ENCODE measurements at regions of chr1 and their contacts with region 1.

Region 1: DNA sequence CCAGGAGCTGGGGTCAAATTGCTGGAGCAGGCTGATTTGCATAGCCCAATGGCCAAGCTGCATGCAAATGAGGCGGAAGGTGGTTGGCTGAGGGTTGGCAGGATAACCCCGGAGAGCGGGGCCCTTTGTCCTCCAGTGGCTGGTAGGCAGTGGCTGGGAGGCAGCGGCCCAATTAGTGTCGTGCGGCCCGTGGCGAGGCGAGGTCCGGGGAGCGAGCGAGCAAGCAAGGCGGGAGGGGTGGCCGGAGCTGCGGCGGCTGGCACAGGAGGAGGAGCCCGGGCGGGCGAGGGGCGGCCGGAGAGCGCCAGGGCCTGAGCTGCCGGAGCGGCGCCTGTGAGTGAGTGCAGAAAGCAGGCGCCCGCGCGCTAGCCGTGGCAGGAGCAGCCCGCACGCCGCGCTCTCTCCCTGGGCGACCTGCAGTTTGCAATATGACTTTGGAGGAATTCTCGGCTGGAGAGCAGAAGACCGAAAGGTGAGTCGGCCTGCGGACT is at the start of gene GADD45A:
- DNase-seq: peak; percentile 96 to 97 (median 97)
- H3K4me3 ChIP-seq: peak within 1 kb of the TSS; percentile 74 to 92 (median 91)
- H3K4me3 Mint-ChIP-seq: peak within 1 kb of the TSS; percentile 88 to 91
- H3K27ac ChIP-seq: peak within 1 kb of the TSS; percentile 74 to 91
- H3K27ac Mint-ChIP-seq: peak within 1 kb of the TSS; percentile 78 to 92 (median 89)
- H3K4me1 ChIP-seq: peaks cover 52 to 66% of the 10 kb centered on the region in 2 donors
- H3K4me1 Mint-ChIP-seq: peaks cover 52% of the 10 kb centered on the region
- H3K27me3 ChIP-seq: no peaks in the 10 kb centered on the region
- H3K27me3 Mint-ChIP-seq: peaks cover 1 to 3% (median 2%) of the 10 kb centered on the region in 3 donors
- CTCF ChIP-seq: no peak
- polyA plus RNA-seq, gene GADD45A: 7.5 to 14.3 (median 9.6) TPM

Region 2: DNA sequence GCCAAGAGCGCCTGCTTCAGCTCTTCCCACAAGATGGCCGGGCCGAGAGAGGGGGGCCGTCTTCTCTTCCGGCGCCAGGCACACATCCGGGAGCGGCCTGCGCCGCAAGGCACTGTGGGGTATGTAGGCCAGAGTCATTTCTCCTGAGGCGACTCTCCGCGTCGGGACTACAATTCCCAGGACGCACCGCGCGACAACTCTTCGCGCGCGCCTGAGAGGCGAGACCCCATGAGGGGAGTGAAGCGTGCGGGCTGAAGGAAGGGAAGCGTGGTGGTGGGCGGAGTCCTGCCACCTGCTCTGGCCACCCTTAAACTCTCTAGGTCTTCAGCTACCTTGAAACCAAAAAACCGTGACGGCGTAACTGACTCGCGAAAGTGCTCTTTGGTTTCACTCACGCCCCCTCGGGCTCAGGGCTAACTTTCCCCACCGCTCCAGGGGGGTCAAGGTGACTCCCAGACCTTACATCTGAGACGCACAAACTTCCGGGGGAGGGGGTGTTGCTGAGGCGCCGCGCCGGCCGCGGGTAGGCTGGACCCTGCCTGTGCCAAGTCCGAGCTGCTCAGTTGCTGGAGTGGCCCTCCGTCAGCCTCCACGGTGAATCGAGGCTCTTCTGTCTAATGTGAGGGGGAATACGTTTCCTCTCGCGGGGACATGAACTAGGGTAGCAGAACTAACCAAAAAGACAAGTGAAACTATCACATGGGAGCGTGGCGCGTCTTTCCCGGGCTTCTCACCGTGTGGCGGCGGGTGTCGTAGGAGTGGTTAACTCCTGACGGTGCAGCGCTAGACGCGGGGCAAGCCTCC is 254.6 kb before region 1 on chr1 and contains the start of gene SERBP1:
- intact Hi-C with region 1: loop called in 1 of 2 experiments (anchors 10 kb)
- DNase-seq: peak; percentile 91 to 93 (median 92)
- H3K4me3 ChIP-seq: peak within 1 kb of the TSS; percentile 65 to 97 (median 66)
- H3K4me3 Mint-ChIP-seq: peak within 1 kb of the TSS; percentile 98 to 99
- H3K27ac ChIP-seq: peak within 1 kb of the TSS; percentile 84 to 92
- H3K27ac Mint-ChIP-seq: peak within 1 kb of the TSS; percentile 93 to 99 (median 95)
- H3K4me1 ChIP-seq: peaks cover 29 to 55% of the 10 kb centered on the region in 2 donors
- H3K4me1 Mint-ChIP-seq: peaks cover 57% of the 10 kb centered on the region
- H3K27me3 ChIP-seq: no peaks in the 10 kb centered on the region
- H3K27me3 Mint-ChIP-seq: peaks cover 0 to 2% (median 0%) of the 10 kb centered on the region in 3 donors
- CTCF ChIP-seq: no peak
- polyA plus RNA-seq, gene SERBP1: 38.2 to 78.8 (median 75.3) TPM

Region 3: DNA sequence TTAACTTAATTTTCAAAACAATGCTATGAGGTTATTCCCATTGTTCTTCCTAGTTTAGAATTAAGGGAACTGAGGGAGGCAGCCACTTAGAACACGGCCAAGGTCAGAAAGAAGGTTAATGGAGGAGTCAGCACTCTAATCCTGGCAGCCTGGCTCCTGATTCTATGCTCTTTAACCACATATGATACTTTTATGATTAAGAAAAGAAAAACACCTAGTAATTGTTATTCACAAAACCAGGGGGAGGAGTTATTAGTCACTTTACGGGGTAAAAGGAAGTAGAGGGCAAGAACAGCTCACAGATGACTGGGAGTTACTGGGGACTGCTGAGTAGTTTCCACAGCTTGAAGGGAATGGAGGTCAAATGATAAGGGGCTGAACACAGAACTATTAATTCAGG is 38.5 kb after region 1 on chr1:
- intact Hi-C with region 1: loop called in 1 of 2 experiments (anchors 5 kb)
- DNase-seq: peak; percentile 36 to 76 (median 38)
- H3K4me3 ChIP-seq: no peak overlapping the region
- H3K4me3 Mint-ChIP-seq: no peak overlapping the region
- H3K27ac ChIP-seq: no peak overlapping the region
- H3K27ac Mint-ChIP-seq: no peak overlapping the region
- H3K4me1 ChIP-seq: peaks cover 3 to 5% of the 10 kb centered on the region in 2 donors
- H3K4me1 Mint-ChIP-seq: peaks cover 4% of the 10 kb centered on the region
- H3K27me3 ChIP-seq: no peaks in the 10 kb centered on the region
- H3K27me3 Mint-ChIP-seq: no peaks in the 10 kb centered on the region
- CTCF ChIP-seq: no peak

Region 4: DNA sequence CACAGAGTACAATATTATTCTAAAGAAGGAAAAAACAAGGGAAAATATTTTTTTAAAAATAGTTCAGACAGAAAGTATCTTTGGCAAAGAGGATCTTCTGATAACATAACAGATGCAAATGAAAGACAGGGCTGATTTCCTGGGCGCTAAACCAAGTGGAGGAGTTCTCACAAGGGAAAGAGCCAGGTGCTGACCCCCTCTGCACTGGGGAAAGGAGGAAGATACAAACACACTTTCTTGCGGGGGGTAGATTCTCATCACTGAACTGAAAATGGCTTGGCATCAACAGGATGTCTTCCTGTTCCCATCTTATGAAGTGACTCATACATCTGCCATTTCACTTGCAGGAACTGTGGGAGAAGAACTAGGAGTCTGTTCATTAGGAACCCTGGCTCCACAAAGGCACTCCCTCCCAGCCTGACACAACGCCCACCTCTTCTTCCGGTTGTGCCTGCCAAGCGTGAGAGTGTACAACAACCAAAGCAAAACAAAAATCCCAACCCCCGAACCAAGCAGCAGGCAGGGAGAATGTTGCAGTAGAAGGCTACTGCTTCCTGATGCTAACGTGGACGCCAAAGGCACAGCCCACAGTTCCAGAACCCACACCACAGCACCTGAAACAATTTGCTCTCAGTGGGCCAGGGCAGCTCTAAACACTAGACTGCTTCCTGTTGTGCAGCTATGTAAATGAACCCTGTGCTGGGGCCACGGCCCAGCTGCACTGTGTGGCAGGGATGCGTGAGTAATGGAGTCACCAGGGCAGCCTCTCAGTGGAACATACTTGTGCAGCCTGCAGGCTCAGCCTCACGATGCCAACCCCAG is 50.9 kb after region 1 on chr1:
- intact Hi-C with region 1: loop called in 1 of 2 experiments (anchors 5 kb)
- DNase-seq: peak; percentile 33 to 51 (median 33)
- H3K4me3 ChIP-seq: peak overlapping the region in 1 of 3 experiments; percentile 46
- H3K4me3 Mint-ChIP-seq: peak overlapping the region; percentile 72 to 84
- H3K27ac ChIP-seq: no peak overlapping the region
- H3K27ac Mint-ChIP-seq: peak overlapping the region in 6 of 7 donors; percentile 15 to 87 (median 52)
- H3K4me1 ChIP-seq: peaks cover 18 to 20% of the 10 kb centered on the region in 2 donors
- H3K4me1 Mint-ChIP-seq: peaks cover 45% of the 10 kb centered on the region
- H3K27me3 ChIP-seq: no peaks in the 10 kb centered on the region
- H3K27me3 Mint-ChIP-seq: peaks cover 0 to 1% (median 0%) of the 10 kb centered on the region in 3 donors
- CTCF ChIP-seq: no peak

Measured in CD14-positive monocyte (primary cell).